Gastrocnemius medialis (tissue), 4 donors: ENCODE measurements at regions of chr11 and their contacts with region 1.

Region 1: GRCh38 chr11:84564180-84564866 is 1062.8 kb downstream of the DLG2 start:
- DNase-seq: no peak
- ATAC-seq: no peak
- H3K4me3 ChIP-seq: no peak overlapping the region
- H3K27ac ChIP-seq: no peak overlapping the region
- H3K4me1 ChIP-seq: no peaks in the 10 kb centered on the region
- H3K27me3 ChIP-seq: no peaks in the 10 kb centered on the region
- CTCF ChIP-seq: peak; percentile 22 to 74 (median 66)
- POLR2A ChIP-seq: no peak

Region 2: GRCh38 chr11:84714316-84714780 is 150.0 kb after region 1 on chr11:
- in situ Hi-C with region 1: loop called in 3 of 4 experiments (anchors 5 to 25 kb)
- intact Hi-C with region 1: no loop called
- DNase-seq: peak in 1 of 2 donors; percentile 23
- ATAC-seq: peak; percentile 45 to 66
- H3K4me3 ChIP-seq: no peak overlapping the region
- H3K27ac ChIP-seq: no peak overlapping the region
- H3K4me1 ChIP-seq: no peaks in the 10 kb centered on the region
- H3K27me3 ChIP-seq: no peaks in the 10 kb centered on the region
- CTCF ChIP-seq: peak in 2 of 5 experiments; percentile 42 to 49
- POLR2A ChIP-seq: no peak

Region 3: DNA sequence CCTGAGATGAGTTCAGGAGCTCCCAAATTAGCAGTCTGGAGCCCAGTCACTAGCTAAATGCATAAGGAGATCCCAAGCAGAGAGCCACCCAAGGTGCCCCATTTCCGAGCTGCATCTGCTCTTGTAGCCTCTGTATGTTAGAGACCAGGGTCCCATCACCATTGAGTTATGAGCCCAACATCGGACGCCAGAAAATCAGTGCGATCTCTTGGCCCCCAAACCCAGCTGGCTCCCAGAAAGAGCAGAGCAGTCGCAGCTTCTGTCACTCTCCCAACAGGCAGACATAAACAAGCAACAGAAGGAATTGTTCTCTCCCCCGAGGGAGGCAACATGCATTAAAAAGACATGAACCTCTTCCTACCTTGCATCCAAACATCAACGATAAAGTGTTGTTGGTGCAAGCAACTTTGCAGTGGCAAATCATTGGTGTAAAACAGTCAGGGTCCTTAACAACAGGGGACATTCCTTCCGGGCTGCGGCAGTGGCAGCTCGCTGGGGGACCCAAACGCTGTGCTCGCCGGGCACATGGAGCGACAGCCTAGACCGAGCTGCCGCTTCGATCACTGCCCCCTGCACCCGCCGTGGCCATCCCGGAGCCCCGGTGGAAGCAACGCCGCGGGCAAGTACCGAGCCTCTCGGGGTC is 155.7 kb after region 1 on chr11:
- in situ Hi-C with region 1: loop called in 2 of 4 experiments (anchors 5 to 25 kb)
- intact Hi-C with region 1: no loop called
- DNase-seq: no peak
- ATAC-seq: peak; percentile 39 to 46
- H3K4me3 ChIP-seq: peak overlapping the region; percentile 57 to 67 (median 64)
- H3K27ac ChIP-seq: no peak overlapping the region
- H3K4me1 ChIP-seq: peaks cover 4 to 7% of the 10 kb centered on the region in 2 donors
- H3K27me3 ChIP-seq: no peaks in the 10 kb centered on the region
- CTCF ChIP-seq: no peak
- POLR2A ChIP-seq: no peak